ENCODE measurements at regions of chr1 and their contacts with region 1.

Region 1: DNA sequence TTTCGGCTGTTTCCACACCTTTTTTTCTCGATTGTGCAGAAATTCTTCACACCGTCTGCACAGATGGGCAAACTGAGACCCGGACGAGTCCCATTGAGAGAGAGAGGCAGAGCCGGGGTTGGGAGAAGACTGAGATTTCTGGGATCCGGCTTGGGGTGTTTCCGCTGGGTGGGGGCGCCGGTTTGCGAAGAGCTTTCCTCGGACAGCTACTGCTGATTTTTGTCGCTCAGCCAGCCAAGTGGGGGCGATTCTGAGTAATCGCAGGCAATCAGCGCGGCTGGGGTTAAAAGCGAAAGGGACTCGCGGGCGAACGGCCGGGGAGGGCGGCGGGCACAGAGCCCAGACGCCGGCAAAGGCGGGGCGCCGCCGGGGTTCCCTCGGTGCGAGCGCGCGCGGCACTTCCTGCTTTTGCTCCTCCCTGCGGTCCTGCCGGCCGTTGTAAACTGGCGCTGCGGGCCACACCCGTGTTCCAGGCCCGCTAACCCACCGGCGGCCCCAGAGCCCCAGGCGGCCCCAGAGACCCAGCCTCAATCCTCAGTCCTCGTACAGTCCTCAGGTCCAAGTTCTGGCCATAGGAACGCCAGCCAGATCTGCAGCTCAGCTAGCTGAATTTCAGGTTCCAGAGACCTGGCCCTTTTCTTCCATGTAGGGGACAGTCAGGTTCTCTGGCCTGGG is 32.4 kb upstream of the JUN start:
- DNase-seq: peak; percentile 96
- H3K4me3 Mint-ChIP-seq: peak overlapping the region; percentile 87
- H3K27ac Mint-ChIP-seq: peak overlapping the region; percentile 87
- H3K4me1 Mint-ChIP-seq: peaks cover 47% of the 10 kb centered on the region
- H3K27me3 Mint-ChIP-seq: no peaks in the 10 kb centered on the region

Region 2: GRCh38 chr1:58857680-58858673 is 41.8 kb after region 1 on chr1:
- intact Hi-C with region 1: loop called (anchors 2 kb)
- DNase-seq: peak; percentile 81
- H3K4me3 Mint-ChIP-seq: peak overlapping the region; percentile 64
- H3K27ac Mint-ChIP-seq: peak overlapping the region; percentile 92
- H3K4me1 Mint-ChIP-seq: peaks cover 49% of the 10 kb centered on the region
- H3K27me3 Mint-ChIP-seq: peaks cover 2% of the 10 kb centered on the region

Region 3: DNA sequence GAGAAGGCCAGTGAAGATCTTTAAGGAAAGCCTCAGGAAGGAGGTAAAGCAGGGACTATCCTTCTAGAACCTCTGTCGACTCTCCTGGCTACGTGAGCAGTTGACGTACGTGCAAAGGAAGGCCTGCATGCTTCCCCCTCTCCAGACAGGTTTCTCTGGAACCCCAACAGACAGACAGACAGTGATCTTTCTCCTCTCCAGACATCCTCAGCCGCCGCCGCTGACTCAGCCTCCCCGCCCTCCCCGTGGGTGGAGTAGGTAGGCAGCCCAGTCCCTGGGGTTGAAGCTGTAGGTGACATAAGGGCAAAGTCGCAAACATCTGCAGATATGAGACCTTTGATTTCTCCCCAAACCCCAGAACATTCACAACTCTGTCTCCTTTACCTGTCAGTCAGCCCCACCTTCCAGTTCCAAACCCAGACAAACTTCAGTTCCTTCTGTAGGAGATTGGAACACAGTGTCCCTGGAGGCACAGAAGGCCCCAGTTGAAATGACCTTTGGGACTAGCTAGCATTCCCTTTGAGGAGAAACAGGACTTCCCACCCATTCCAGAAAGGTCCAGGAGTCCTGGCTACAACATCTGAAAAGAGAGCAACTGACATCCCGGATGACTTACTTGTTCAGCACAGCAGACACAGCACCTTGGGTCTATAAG is 113.6 kb after region 1 on chr1:
- intact Hi-C with region 1: loop called (anchors 5 kb)
- DNase-seq: peak; percentile 86
- H3K4me3 Mint-ChIP-seq: peak overlapping the region; percentile 28
- H3K27ac Mint-ChIP-seq: peak overlapping the region; percentile 66
- H3K4me1 Mint-ChIP-seq: peaks cover 57% of the 10 kb centered on the region
- H3K27me3 Mint-ChIP-seq: no peaks in the 10 kb centered on the region

Region 4: DNA sequence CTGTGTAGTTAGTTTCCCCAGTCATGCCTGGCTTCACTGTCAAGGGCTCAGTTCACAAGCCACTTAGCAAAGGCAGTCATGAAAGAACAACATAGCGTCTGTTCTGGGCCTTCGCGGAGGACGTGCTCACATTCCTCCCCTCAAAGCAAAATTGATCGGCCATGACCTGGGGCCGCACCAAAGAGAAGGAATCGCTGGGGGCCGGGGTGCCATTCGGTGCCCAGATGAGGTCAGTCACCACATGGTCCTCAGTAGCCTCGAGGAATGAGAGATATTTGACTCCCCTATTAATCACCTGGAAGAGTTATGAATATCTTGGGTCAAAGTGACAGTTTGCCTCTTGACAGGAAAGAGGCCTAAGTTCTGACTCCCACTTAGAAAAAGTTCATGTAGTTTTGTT is 218.7 kb after region 1 on chr1:
- intact Hi-C with region 1: no loop called
- DNase-seq: no peak
- H3K4me3 Mint-ChIP-seq: no peak overlapping the region
- H3K27ac Mint-ChIP-seq: no peak overlapping the region
- H3K4me1 Mint-ChIP-seq: no peaks in the 10 kb centered on the region
- H3K27me3 Mint-ChIP-seq: no peaks in the 10 kb centered on the region

Region 5: GRCh38 chr1:59150577-59151391 is 334.6 kb after region 1 on chr1:
- intact Hi-C with region 1: loop called (anchors 5 kb)
- DNase-seq: peak; percentile 81
- H3K4me3 Mint-ChIP-seq: peak overlapping the region; percentile 35
- H3K27ac Mint-ChIP-seq: peak overlapping the region; percentile 51
- H3K4me1 Mint-ChIP-seq: peaks cover 33% of the 10 kb centered on the region
- H3K27me3 Mint-ChIP-seq: no peaks in the 10 kb centered on the region

Measured in activated CD4-positive, alpha-beta T cell treated with anti-CD3 and anti-CD28 coated beads, Interleukin-2, amount 10 ng/mL, durations not matched to agents 24 days and 14 days (primary cell).